Activated naive CD4-positive, alpha-beta T cell treated with anti-CD3 and anti-CD28 coated beads for 36 hours (primary cell): ENCODE measurements at regions of chr2 and their contacts with region 1.

Region 1: GRCh38 chr2:178306352-178307073 is 112.2 kb downstream of the OSBPL6 start:
- DNase-seq: peak; percentile 62
- H3K4me3 Mint-ChIP-seq: no peak overlapping the region
- H3K27ac Mint-ChIP-seq: no peak overlapping the region
- H3K4me1 Mint-ChIP-seq: peaks cover 2% of the 10 kb centered on the region
- H3K27me3 Mint-ChIP-seq: peaks cover 12% of the 10 kb centered on the region

Region 2: DNA sequence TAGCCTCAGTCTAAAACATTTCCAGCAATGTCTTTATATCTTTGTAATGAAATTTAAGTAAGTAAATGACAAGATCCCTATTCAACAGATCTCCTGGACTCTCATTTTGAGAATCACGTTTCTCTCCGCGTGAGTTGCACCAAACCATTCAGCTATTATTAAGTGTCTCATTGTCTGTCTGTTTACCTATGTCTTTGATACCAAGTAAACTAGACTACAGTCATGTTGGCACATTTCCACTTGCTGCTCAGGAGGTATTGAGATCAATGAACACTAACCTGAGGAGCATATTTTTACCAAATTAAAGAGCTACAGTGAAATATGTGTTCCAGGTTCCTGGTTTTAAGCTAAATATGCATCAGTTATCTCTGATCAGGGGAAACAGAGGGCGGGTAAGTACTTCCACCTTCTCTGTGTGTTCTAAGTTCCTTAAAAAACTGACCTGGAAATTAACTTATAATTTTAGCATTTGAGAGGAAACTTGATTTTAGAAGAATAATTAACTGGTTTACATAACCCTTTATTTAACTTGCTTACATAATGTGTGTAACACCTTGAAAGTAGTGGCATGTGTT is 13.6 kb after region 1 on chr2:
- CTCF ChIA-PET with region 1: interaction called, 13 read pairs
- intact Hi-C with region 1: no loop called
- DNase-seq: no peak
- H3K4me3 Mint-ChIP-seq: no peak overlapping the region
- H3K27ac Mint-ChIP-seq: no peak overlapping the region
- H3K4me1 Mint-ChIP-seq: no peaks in the 10 kb centered on the region
- H3K27me3 Mint-ChIP-seq: peaks cover 23% of the 10 kb centered on the region